HCT116 (cell line): ENCODE measurements at regions of chr17 and their contacts with region 1.

Region 1: DNA sequence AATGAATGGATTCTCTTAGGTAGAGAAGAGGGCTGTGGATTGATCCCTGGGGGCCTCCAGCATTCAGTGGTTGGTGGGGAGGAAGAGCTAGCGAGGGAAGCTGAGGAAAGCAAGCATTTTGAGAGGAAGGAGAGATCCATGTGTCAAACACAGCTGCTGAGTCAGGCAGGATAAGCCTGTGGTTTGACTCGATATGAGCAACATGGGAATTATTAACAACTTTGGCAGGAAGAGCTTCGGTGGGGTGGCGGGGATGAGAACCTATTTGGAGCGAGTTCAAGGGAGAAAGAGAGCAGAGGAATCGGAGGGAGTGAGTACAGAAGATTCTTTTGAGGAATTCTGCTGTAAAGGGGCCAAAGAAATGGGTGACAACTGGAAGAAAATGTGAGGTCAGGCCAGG is 59.5 kb upstream of the CDC42EP4 start:
- DNase-seq: no peak
- ATAC-seq: no peak
- H3K4me3 ChIP-seq: no peak overlapping the region
- H3K27ac ChIP-seq: no peak overlapping the region
- H3K4me1 ChIP-seq: no peaks in the 10 kb centered on the region
- H3K27me3 ChIP-seq: peaks cover 31% of the 10 kb centered on the region; the same call in 1 of the 2 replicates
- CTCF ChIP-seq: no peak
- POLR2A ChIP-seq: no peak
- RAD21 ChIP-seq: no peak

Region 2: GRCh38 chr17:72725433-72726068 is 645.7 kb before region 1 on chr17:
- CTCF ChIA-PET with region 1: interaction called, 72 read pairs
- POLR2A ChIA-PET with region 1: no interaction called
- RAD21 ChIA-PET with region 1: interaction called, 4 to 7 read pairs
- intact Hi-C with region 1: loop called (anchors 1 kb)
- DNase-seq: peak; percentile 66
- ATAC-seq: peak; percentile 83
- H3K4me3 ChIP-seq: no peak overlapping the region
- H3K27ac ChIP-seq: no peak overlapping the region
- H3K4me1 ChIP-seq: peaks cover 0 to 34% of the 10 kb centered on the region in 2 experiments; a peak in 1 of 4 replicates
- H3K27me3 ChIP-seq: no peaks in the 10 kb centered on the region
- CTCF ChIP-seq: peak; percentile 95 to 100 (median 98)
- POLR2A ChIP-seq: no peak
- RAD21 ChIP-seq: peak; percentile 98

Region 3: DNA sequence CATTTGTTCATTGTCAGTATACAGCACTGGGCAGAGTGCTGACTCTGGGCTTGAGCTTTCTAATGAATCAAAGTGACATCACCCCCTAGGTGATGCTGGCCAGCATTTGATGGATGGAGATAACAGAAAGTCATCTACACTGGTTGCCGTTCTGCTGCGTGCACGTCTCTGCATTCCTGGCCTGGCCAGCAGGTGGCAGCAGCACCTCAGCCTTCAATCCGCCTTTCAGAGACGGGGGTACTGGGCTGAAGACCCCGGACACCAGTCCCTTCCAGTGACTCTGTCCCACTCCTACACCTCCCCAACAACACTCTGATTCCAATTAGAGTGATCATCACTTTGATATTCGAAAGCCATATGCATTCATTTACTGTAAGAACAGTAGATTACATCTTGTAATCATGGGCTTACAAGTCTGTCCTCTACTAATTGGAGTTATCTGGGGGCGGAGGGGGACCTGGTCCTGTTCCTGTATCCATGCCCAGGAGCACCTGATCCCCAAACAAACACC is 115.6 kb before region 1 on chr17:
- CTCF ChIA-PET with region 1: interaction called, 180 read pairs
- POLR2A ChIA-PET with region 1: interaction called, 3 read pairs
- RAD21 ChIA-PET with region 1: interaction called, 18 to 43 read pairs
- intact Hi-C with region 1: loop called (anchors 1 kb)
- DNase-seq: peak; percentile 48
- ATAC-seq: peak; percentile 92
- H3K4me3 ChIP-seq: no peak overlapping the region
- H3K27ac ChIP-seq: no peak overlapping the region
- H3K4me1 ChIP-seq: no peaks in the 10 kb centered on the region
- H3K27me3 ChIP-seq: no peaks in the 10 kb centered on the region
- CTCF ChIP-seq: peak; percentile 97 to 100 (median 98)
- POLR2A ChIP-seq: no peak
- RAD21 ChIP-seq: peak; percentile 100

Region 4: DNA sequence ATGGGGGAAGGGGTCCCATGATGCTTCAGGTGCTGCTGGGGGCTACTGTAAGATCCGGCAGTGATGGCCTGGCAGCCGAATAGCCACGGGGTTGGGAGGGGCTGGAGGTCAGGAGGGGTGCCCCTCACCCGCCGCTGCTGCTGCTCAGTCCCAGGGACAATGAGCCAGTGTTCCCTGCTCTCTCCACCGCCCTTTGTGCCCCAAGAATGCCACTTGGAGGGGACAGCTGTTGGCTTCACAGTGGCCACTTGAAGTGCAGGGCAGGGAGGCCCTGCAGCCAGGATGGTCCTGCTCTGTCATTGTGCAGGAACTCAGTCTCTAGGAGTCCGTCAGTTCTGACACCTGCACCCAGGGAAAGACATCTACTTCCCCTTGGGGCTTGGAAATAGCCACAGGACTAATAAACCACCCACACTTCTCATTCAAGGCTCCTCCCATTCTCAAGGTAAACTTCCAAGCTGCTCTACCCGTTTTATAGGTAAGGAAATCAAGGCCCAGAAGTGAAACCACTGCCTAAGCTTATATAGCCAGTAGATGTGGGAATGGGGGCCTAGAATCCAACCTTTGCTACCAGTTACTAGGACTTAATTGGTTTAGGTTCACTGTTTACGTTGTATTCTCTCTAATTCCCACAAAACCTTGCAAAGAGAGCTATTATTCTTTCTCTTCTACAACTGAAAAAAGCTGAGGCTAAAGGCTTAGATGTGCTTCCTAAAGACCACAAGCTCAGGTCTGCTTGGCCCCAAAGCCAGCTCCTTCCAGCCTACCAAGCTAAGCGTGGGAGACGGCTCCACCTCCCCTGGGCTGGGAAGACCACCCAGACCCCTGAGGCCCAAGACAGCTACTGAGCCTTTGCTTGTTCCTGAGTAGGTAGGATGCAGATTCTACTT is 103.4 kb before region 1 on chr17:
- CTCF ChIA-PET with region 1: interaction called, 19 read pairs
- POLR2A ChIA-PET with region 1: no interaction called
- RAD21 ChIA-PET with region 1: interaction called in 1 of 2 experiments, 3 read pairs
- intact Hi-C with region 1: no loop called
- DNase-seq: no peak
- ATAC-seq: no peak
- H3K4me3 ChIP-seq: no peak overlapping the region
- H3K27ac ChIP-seq: no peak overlapping the region
- H3K4me1 ChIP-seq: peaks cover 2 to 11% of the 10 kb centered on the region in 2 experiments; a peak in 2 of 4 replicates
- H3K27me3 ChIP-seq: no peaks in the 10 kb centered on the region
- CTCF ChIP-seq: no peak
- POLR2A ChIP-seq: no peak
- RAD21 ChIP-seq: no peak

Region 5: DNA sequence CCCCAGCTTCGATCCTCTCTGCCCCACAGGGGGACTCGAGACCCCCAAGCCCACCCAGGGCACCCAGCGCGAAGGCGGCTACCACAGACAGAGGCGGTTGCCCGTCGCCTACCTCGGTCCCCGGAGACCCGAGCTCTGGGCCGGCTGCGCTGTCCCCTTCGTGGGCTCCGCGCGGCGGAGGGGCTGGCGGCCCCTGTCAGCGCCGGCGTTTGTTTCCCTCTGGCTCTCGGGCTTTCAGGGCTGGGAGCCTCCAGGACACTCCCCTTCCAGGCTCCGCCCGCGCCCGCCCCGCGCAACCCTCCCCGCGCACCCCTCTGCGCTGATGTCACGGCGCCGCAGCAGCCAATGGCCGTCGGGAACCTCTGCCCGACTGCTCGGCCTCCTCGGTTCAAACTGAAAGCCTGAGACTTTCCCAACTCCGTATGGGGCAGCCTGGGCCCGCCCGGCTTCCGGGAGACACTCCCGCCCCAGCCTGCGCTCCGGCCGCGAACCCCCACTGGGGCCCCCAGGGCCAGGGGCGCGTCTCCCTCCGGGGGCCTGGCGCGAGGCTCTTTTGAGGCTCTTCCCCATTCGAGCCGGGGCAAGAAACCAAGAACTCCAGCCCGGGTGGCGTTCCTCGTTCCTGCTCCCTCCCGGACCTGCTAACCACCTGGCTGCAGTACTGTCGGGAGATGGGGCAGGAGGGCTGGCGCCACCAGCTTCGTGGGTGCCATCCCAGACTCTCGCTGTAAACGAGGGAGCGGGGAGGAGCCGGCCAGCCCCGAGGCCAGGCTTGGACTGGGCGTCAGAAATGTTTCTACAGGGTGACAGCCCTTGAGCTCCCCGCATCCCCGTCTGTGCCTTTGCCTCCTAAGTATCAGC is 59.3 kb before region 1 on chr17 and contains the start of gene CDC42EP4:
- CTCF ChIA-PET with region 1: interaction called, 25 read pairs
- POLR2A ChIA-PET with region 1: interaction called, 5 read pairs
- RAD21 ChIA-PET with region 1: interaction called, 4 to 6 read pairs
- intact Hi-C with region 1: loop called (anchors 1 kb)
- DNase-seq: peak; percentile 89
- ATAC-seq: peak; percentile 82
- H3K4me3 ChIP-seq: peak within 1 kb of the TSS; percentile 97 to 100
- H3K27ac ChIP-seq: peak within 1 kb of the TSS; percentile 88
- H3K4me1 ChIP-seq: peaks cover 33 to 45% of the 10 kb centered on the region in 2 experiments
- H3K27me3 ChIP-seq: no peaks in the 10 kb centered on the region
- CTCF ChIP-seq: no peak
- POLR2A ChIP-seq: peak; percentile 60
- RAD21 ChIP-seq: no peak
- total RNA-seq, gene CDC42EP4: 54.9 TPM

Region 6: GRCh38 chr17:73436954-73437353 is 65.7 kb after region 1 on chr17:
- CTCF ChIA-PET with region 1: no interaction called
- POLR2A ChIA-PET with region 1: no interaction called
- RAD21 ChIA-PET with region 1: no interaction called
- intact Hi-C with region 1: no loop called
- DNase-seq: no peak
- ATAC-seq: no peak
- H3K4me3 ChIP-seq: no peak overlapping the region
- H3K27ac ChIP-seq: no peak overlapping the region
- H3K4me1 ChIP-seq: no peaks in the 10 kb centered on the region
- H3K27me3 ChIP-seq: 0 out of 2 replicates have a peak, but pooled peaks cover 9% of the 10 kb centered on the region
- CTCF ChIP-seq: no peak
- POLR2A ChIP-seq: no peak
- RAD21 ChIP-seq: no peak

Region 7: DNA sequence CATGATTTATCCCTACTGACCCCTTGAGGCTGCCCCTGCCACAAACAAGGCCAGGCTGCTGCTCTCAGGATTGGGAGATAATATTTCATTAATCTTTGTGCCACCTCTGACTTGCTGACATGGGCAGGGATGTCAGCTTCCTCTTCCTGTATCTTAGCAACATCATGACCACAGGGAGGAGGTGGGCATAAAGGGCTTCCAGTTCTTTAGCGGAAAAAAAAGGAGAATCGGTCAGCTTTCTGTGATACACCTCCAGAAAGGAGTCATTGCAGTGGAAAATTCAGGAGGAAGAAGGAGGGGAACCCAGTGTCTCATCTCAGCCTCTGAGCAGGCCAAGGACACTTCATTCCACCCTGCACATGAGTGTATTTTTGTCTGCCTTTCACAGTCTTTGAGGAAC is 479.8 kb after region 1 on chr17:
- CTCF ChIA-PET with region 1: no interaction called
- POLR2A ChIA-PET with region 1: no interaction called
- RAD21 ChIA-PET with region 1: no interaction called
- intact Hi-C with region 1: no loop called
- DNase-seq: no peak
- ATAC-seq: no peak
- H3K4me3 ChIP-seq: no peak overlapping the region
- H3K27ac ChIP-seq: no peak overlapping the region
- H3K4me1 ChIP-seq: no peaks in the 10 kb centered on the region
- H3K27me3 ChIP-seq: no peaks in the 10 kb centered on the region
- CTCF ChIP-seq: no peak
- POLR2A ChIP-seq: no peak
- RAD21 ChIP-seq: no peak